PC-9 (cell line): ENCODE measurements at regions of chr5 and their contacts with region 1.

Region 1: DNA sequence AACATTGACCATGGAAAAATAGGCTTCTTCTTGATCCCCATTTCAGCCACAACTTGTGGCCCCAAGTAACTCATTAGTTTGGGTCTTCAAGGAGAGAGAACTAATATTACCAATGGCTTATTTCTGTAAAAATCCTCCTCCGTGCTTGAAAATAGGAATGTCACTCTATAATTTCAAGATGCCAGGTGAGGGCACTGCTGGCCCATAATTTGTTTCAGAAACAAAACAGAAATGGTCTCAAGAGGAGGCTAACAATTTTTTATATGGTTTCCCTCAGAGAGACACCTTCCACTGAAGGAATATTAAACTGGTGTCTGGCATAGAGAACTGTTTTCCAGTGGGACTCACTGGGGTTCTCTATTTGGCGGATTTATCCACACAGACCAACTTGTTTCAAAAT is 437.0 kb upstream of the TRPC7 start:
- DNase-seq: peak in 1 of 2 experiments; percentile 21
- H3K4me3 ChIP-seq: no peak overlapping the region
- H3K27ac ChIP-seq: no peak overlapping the region
- H3K4me1 ChIP-seq: no peaks in the 10 kb centered on the region
- H3K27me3 ChIP-seq: no peaks in the 10 kb centered on the region
- CTCF ChIP-seq: peak; percentile 67

Region 2: DNA sequence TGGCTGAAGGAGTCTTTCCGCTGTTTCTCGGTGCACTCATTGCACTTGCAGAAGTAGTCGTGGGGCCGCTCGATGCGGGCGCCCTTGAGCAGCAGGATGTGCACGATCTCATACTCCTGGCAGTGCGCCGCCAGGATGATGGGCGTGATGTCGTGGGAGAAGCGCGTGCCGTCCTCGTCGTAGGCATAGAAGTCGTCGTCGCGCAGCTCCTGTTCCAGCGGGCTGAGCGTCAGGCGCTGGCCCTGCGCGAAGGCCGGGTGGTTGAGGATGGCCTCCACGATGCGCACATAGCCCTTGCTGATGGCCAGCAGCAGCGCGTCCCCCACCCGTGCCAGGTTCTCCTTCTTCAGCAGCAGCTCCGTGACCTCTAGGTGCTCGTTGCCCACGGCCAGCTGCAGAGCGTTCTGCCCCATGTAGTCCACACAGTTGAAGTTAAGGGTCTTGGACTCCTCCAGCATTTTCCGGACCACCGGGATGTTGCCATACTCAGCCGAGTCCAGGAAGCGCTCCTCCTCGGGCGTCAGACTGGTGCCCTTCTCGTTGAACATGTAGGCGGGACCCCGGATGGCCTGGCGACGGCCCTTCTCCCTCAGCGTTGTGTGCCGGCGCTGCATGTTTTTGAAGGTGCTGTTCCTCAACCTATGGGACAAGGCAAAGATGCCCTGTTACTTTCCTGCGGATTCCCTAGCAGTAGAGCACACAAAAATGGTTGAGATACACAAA is 445.5 kb before region 1 on chr5:
- CTCF ChIA-PET with region 1: no interaction called
- POLR2A ChIA-PET with region 1: no interaction called
- intact Hi-C with region 1: no loop called
- DNase-seq: no peak
- H3K4me3 ChIP-seq: no peak overlapping the region
- H3K27ac ChIP-seq: no peak overlapping the region
- H3K4me1 ChIP-seq: no peaks in the 10 kb centered on the region
- H3K27me3 ChIP-seq: no peaks in the 10 kb centered on the region
- CTCF ChIP-seq: no peak

Region 3: GRCh38 chr5:136388474-136388873 is 413.9 kb before region 1 on chr5:
- CTCF ChIA-PET with region 1: no interaction called
- POLR2A ChIA-PET with region 1: no interaction called
- intact Hi-C with region 1: no loop called
- DNase-seq: no peak
- H3K4me3 ChIP-seq: no peak overlapping the region
- H3K27ac ChIP-seq: no peak overlapping the region
- H3K4me1 ChIP-seq: no peaks in the 10 kb centered on the region
- H3K27me3 ChIP-seq: no peaks in the 10 kb centered on the region
- CTCF ChIP-seq: no peak

Region 4: GRCh38 chr5:136491806-136492205 is 310.6 kb before region 1 on chr5:
- CTCF ChIA-PET with region 1: no interaction called
- POLR2A ChIA-PET with region 1: no interaction called
- intact Hi-C with region 1: no loop called
- DNase-seq: no peak
- H3K4me3 ChIP-seq: no peak overlapping the region
- H3K27ac ChIP-seq: no peak overlapping the region
- H3K4me1 ChIP-seq: no peaks in the 10 kb centered on the region
- H3K27me3 ChIP-seq: no peaks in the 10 kb centered on the region
- CTCF ChIP-seq: no peak

Region 5: DNA sequence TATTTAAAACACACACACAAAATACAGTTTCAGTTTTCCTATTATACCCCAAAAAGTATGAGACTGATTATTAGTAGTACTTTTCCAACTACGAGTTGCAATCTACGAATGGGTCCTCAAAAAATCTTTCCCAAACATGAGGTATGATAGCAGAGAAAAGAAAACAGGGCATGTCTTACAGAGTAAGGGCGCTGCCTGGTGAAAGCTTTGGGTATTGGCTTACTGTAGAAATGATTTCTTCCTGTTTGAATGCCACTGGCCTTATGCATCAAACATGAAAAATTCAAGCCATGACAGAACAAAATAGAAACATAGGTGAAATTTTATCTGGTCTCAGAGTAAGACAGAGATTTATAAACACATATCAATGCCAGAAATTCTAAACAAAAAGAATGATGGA is 248.8 kb after region 1 on chr5:
- CTCF ChIA-PET with region 1: interaction called, 5 read pairs
- POLR2A ChIA-PET with region 1: no interaction called
- intact Hi-C with region 1: loop called (anchors 5 kb)
- DNase-seq: no peak
- H3K4me3 ChIP-seq: no peak overlapping the region
- H3K27ac ChIP-seq: no peak overlapping the region
- H3K4me1 ChIP-seq: no peaks in the 10 kb centered on the region
- H3K27me3 ChIP-seq: no peaks in the 10 kb centered on the region
- CTCF ChIP-seq: peak; percentile 62

Region 6: DNA sequence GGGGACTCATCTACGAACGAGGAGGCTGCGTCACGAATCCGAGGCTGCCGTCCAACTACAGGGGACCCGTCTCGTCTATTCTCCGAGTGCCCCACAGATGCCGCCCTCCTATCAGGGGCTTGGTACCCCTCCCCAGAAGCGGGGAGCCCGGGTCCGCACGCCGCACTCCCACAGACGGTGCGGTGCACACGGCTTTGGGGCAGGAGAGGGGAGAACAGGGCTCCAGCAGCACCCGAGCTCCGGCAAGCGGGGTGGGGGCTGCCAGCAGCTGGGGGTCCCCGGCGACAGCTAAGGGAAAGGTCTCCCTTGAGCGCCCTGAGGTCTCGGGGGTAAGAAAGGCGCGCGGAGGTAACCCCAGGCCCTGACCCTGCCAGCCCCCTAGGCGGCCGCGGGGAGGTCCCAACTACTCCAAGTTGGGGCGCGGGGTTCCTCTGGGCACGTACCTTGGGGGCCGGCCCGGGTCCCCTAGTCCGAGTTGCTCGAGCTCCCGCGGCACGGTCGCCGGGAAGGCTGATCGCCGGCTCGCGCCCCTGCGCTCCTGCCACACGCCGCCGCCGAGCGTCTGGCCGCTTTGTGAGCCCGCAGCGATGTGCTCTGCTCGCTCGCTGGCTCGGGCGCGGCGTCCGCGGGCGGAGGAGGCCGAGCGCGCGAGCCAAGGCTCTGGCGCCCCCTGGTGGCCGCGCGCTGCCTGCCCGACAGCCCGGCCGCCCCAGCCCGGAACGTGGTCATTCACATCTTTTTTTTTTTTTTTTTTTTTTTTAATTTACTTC is 696.5 kb after region 1 on chr5 and contains the start of gene SPOCK1:
- CTCF ChIA-PET with region 1: no interaction called
- POLR2A ChIA-PET with region 1: no interaction called
- intact Hi-C with region 1: loop called (anchors 1 kb)
- DNase-seq: peak; percentile 46 to 81
- H3K4me3 ChIP-seq: peak within 1 kb of the TSS; percentile 48; the same call in 1 of the 2 replicates
- H3K27ac ChIP-seq: no peak within 1 kb of the TSS
- H3K4me1 ChIP-seq: no peaks in the 10 kb centered on the region
- H3K27me3 ChIP-seq: no peaks in the 10 kb centered on the region
- CTCF ChIP-seq: peak; percentile 47; the same call in 1 of the 2 replicates
- total RNA-seq, gene SPOCK1: 23.9 and 31.8 TPM in 2 replicates

Region 7: GRCh38 chr5:137619191-137619870 is 816.9 kb after region 1 on chr5:
- CTCF ChIA-PET with region 1: no interaction called
- POLR2A ChIA-PET with region 1: no interaction called
- intact Hi-C with region 1: loop called (anchors 5 kb)
- DNase-seq: peak; percentile 76 to 87
- H3K4me3 ChIP-seq: no peak overlapping the region
- H3K27ac ChIP-seq: peak overlapping the region; percentile 48; the same call in 1 of the 2 replicates
- H3K4me1 ChIP-seq: peaks cover 32% of the 10 kb centered on the region
- H3K27me3 ChIP-seq: no peaks in the 10 kb centered on the region
- CTCF ChIP-seq: no peak

Region 8: DNA sequence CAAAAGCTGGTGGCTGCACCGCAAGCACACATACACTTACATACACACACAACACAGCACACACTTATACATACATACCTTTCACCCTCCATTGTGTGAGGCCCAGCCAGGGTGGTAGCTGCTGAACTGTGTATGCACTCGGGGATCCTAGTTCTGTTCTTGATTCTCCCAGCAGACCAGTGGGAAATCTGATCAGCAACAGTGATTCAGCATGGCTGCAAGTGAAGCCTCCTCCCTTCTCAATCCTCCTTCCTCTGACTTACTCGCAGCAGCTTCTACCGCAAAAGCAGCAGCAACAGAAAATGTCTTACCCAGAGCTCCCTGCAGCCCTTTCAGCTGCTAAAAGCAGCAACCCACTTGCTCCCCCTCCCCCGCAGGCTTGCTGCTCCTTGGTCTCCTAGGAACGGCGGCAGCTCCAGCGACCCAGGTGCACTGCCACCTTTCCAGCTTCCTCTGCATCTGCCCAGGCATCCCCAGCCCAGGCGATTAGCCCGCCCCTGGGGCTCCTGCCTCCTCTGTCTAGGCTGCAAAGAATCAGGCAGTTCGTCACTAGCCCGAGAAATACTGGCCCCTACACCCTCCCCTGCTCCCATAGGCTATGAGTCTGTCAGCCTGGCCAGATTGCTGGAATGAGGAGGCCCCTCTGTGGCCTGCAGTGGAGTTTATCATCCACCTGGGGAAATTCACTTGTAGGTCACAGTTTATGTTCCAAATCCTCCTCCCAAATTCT is 933.3 kb after region 1 on chr5 and contains the start of gene KLHL3:
- CTCF ChIA-PET with region 1: no interaction called
- POLR2A ChIA-PET with region 1: no interaction called
- intact Hi-C with region 1: loop called (anchors 10 kb)
- DNase-seq: peak; percentile 48 to 61
- H3K4me3 ChIP-seq: peak within 1 kb of the TSS; percentile 51; the same call in 1 of the 2 replicates
- H3K27ac ChIP-seq: peak within 1 kb of the TSS; percentile 81
- H3K4me1 ChIP-seq: peaks cover 52% of the 10 kb centered on the region
- H3K27me3 ChIP-seq: no peaks in the 10 kb centered on the region
- CTCF ChIP-seq: no peak; the same call in 1 of the 2 replicates
- total RNA-seq, gene KLHL3: 13.6 and 15.2 TPM in 2 replicates